MCF 10A (cell line): ENCODE measurements at regions of chr10 and their contacts with region 1.

Region 1: DNA sequence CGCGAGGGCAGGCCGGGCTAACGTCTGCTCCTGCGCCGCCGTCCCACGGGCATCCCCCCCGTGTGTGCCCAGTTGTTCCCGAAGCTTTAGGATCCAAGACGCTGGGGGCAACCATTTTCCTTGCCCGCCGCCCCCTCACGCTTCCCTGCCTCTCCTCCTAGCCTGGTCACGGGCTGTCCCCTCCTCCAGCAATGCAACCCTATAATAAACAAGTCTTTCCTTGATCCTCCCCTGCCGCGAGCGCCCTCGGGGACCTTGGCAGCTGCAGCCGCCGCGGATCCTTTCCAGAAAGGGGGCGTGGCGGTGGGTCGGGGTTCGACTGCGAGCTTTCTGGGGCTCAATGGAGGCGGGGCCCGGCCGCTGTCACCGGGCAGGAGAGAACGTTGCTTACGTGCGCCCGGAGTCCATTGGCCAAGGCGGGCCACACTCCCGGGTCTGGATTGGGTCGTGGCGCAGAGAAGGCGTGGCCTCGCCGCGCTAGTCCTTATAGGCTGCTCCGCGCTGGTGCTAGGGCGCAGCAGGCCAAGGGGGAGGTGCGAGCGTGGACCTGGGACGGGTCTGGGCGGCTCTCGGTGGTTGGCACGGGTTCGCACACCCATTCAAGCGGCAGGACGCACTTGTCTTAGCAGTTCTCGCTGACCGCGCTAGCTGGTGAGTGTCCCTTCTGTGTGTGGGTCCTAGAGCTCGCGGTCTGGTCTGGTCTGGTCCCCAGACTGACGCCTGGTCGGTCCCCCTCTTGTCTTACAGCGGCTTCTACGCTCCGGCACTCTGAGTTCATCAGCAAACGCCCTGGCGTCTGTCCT is at the start of gene DDIT4:
- DNase-seq: peak; percentile 99
- H3K4me3 Mint-ChIP-seq: peak within 1 kb of the TSS; percentile 81
- H3K27ac Mint-ChIP-seq: peak within 1 kb of the TSS; percentile 92
- H3K4me1 Mint-ChIP-seq: peaks cover 38% of the 10 kb centered on the region
- H3K27me3 Mint-ChIP-seq: no peaks in the 10 kb centered on the region
- CTCF ChIP-seq: no peak
- total RNA-seq, gene DDIT4: 698 and 872 TPM in 2 replicates

Region 2: GRCh38 chr10:72126184-72126871 is 147.3 kb before region 1 on chr10:
- CTCF ChIA-PET with region 1: interaction called, 7 read pairs
- POLR2A ChIA-PET with region 1: interaction called, 3 read pairs
- intact Hi-C with region 1: loop called (anchors 1 kb)
- DNase-seq: peak; percentile 59
- H3K4me3 Mint-ChIP-seq: no peak overlapping the region
- H3K27ac Mint-ChIP-seq: no peak overlapping the region
- H3K4me1 Mint-ChIP-seq: no peaks in the 10 kb centered on the region
- H3K27me3 Mint-ChIP-seq: no peaks in the 10 kb centered on the region
- CTCF ChIP-seq: peak; percentile 31

Region 3: GRCh38 chr10:72229261-72230251 is 44.1 kb before region 1 on chr10:
- CTCF ChIA-PET with region 1: interaction called, 4 read pairs
- POLR2A ChIA-PET with region 1: interaction called, 56 read pairs
- intact Hi-C with region 1: no loop called
- DNase-seq: peak; percentile 91
- H3K4me3 Mint-ChIP-seq: no peak overlapping the region
- H3K27ac Mint-ChIP-seq: peak overlapping the region; percentile 68
- H3K4me1 Mint-ChIP-seq: peaks cover 25% of the 10 kb centered on the region
- H3K27me3 Mint-ChIP-seq: no peaks in the 10 kb centered on the region
- CTCF ChIP-seq: no peak

Region 4: DNA sequence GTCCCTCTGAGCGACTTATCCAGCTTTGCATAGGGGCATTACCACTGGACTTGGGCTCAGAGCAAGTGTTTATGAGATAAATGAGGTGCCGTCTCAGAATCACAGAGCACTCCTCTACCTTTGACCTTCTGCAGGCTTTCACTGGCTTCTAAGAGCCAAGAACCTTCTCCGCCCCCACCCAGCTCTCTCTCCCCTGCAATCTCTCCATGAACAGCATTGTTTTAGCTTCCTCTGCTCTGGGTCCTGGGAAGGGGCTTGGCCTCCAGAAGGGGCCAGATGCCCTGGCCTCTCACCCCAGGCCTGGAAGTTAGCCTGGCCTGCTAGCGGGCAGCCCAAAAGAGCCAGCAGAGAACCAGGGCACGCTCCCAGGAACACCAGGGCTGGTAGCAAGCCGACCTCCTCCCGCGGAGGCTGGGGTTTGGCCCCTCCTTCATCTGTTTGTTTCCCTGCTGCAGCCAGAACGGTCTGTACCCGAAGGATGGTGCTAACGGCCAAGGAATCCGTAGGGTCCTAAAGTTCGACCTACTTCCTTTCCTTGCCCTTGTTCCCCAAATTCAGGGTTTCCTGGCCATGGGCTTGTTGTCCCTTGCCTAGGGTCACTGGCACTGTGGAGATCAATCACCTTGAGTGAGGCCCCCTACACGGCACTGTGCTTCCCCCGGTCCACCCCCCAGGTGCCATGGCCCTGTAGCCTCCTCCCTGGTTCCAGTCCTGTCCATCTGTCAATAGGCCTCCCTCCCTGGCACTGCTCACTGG is 18.6 kb before region 1 on chr10:
- CTCF ChIA-PET with region 1: interaction called, 23 read pairs
- POLR2A ChIA-PET with region 1: interaction called, 902 read pairs
- intact Hi-C with region 1: no loop called
- DNase-seq: peak; percentile 93
- H3K4me3 Mint-ChIP-seq: peak overlapping the region; percentile 46
- H3K27ac Mint-ChIP-seq: peak overlapping the region; percentile 88
- H3K4me1 Mint-ChIP-seq: peaks cover 48% of the 10 kb centered on the region
- H3K27me3 Mint-ChIP-seq: no peaks in the 10 kb centered on the region
- CTCF ChIP-seq: no peak

Region 5: GRCh38 chr10:72308320-72308987 is 34.8 kb after region 1 on chr10:
- CTCF ChIA-PET with region 1: no interaction called
- POLR2A ChIA-PET with region 1: interaction called, 383 read pairs
- intact Hi-C with region 1: no loop called
- DNase-seq: peak; percentile 87
- H3K4me3 Mint-ChIP-seq: no peak overlapping the region
- H3K27ac Mint-ChIP-seq: peak overlapping the region; percentile 84
- H3K4me1 Mint-ChIP-seq: peaks cover 33% of the 10 kb centered on the region
- H3K27me3 Mint-ChIP-seq: no peaks in the 10 kb centered on the region
- CTCF ChIP-seq: no peak

Region 6: GRCh38 chr10:72354478-72355213 is 81.0 kb after region 1 on chr10 and contains the start of gene DNAJB12:
- CTCF ChIA-PET with region 1: interaction called, 6 read pairs
- POLR2A ChIA-PET with region 1: interaction called, 12 read pairs
- intact Hi-C with region 1: no loop called
- DNase-seq: peak; percentile 93
- H3K4me3 Mint-ChIP-seq: peak within 1 kb of the TSS; percentile 80
- H3K27ac Mint-ChIP-seq: peak within 1 kb of the TSS; percentile 86
- H3K4me1 Mint-ChIP-seq: peaks cover 34% of the 10 kb centered on the region
- H3K27me3 Mint-ChIP-seq: no peaks in the 10 kb centered on the region
- CTCF ChIP-seq: no peak
- total RNA-seq, gene DNAJB12: 64.7 and 68.1 TPM in 2 replicates

Region 7: GRCh38 chr10:72682626-72683025 is 409.0 kb after region 1 on chr10:
- CTCF ChIA-PET with region 1: no interaction called
- POLR2A ChIA-PET with region 1: no interaction called
- intact Hi-C with region 1: no loop called
- DNase-seq: no peak
- H3K4me3 Mint-ChIP-seq: no peak overlapping the region
- H3K27ac Mint-ChIP-seq: no peak overlapping the region
- H3K4me1 Mint-ChIP-seq: peaks cover 10% of the 10 kb centered on the region
- H3K27me3 Mint-ChIP-seq: no peaks in the 10 kb centered on the region
- CTCF ChIP-seq: no peak